Activated T-helper 1 cell treated with anti-CD3 and anti-CD28 coated beads, Interleukin-12 subunit alpha, Interleukin-12 subunit beta, Interleukin-2, Interleukin-4 antibody, amounts not matched to agents 30 ng/mL and 10 ng/mL and 1 ng/mL, durations not matched to agents 14 hours and 24 hours and 36 hours (primary cell): ENCODE measurements at regions of chr17 and their contacts with region 1.

Region 1: DNA sequence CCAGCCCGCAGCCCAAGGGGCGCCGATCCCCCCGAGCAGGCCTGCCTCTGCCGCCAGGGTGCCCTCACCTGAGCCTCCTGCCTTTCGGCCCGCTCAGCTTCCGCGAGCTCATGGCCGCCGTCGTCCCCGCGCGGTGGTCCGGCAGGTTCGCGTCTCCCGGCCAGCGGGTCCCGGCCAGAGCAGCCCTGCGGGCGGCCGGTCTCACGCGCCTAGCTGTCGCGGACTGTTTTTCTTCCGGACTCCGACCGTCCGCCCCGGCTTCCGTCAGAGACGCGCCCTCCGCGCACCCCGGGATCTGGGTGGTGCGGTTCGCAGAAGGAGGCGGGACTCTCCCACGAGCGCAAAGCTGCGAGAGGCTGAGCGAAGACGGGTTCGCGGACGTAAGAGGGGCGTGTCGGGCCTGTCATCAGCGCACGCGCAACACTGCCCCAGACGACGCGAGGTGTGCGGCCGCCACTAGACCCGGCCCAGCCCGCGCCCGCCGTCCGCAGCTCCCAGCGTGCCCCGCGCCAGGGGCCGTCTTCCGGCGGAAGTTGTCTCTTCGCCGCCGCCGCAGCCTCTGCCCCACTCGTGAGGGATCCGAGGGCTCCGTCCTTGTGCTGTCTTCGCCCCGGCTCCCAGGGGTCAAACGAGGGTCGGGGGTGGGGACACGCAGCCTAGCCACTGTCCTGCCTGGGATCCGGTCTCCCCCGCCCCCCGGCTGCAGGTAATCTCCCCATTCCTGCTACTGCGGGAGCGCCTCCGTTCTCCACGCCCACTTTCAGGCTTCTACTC is at the start of gene INPP5K:
- DNase-seq: peak; percentile 99
- H3K4me3 Mint-ChIP-seq: peak within 1 kb of the TSS; percentile 93
- H3K27ac Mint-ChIP-seq: peak within 1 kb of the TSS; percentile 76
- H3K4me1 Mint-ChIP-seq: peaks cover 13% of the 10 kb centered on the region
- H3K27me3 Mint-ChIP-seq: no peaks in the 10 kb centered on the region
- total RNA-seq, gene INPP5K: 23.9 and 24.7 TPM in 2 replicates

Region 2: GRCh38 chr17:1275962-1276736 is 240.4 kb before region 1 on chr17:
- intact Hi-C with region 1: loop called (anchors 1 kb)
- DNase-seq: peak; percentile 63
- H3K4me3 Mint-ChIP-seq: peak overlapping the region; percentile 39
- H3K27ac Mint-ChIP-seq: peak overlapping the region; percentile 59
- H3K4me1 Mint-ChIP-seq: peaks cover 13% of the 10 kb centered on the region
- H3K27me3 Mint-ChIP-seq: peaks cover 23% of the 10 kb centered on the region

Region 3: GRCh38 chr17:1399679-1400512 is 116.7 kb before region 1 on chr17 and contains the start of gene YWHAE:
- intact Hi-C with region 1: loop called (anchors 1 kb)
- DNase-seq: peak; percentile 95
- H3K4me3 Mint-ChIP-seq: peak within 1 kb of the TSS; percentile 97
- H3K27ac Mint-ChIP-seq: peak within 1 kb of the TSS; percentile 98
- H3K4me1 Mint-ChIP-seq: peaks cover 21% of the 10 kb centered on the region
- H3K27me3 Mint-ChIP-seq: peaks cover 5% of the 10 kb centered on the region
- total RNA-seq, gene YWHAE: 439 and 444 TPM in 2 replicates

Region 4: DNA sequence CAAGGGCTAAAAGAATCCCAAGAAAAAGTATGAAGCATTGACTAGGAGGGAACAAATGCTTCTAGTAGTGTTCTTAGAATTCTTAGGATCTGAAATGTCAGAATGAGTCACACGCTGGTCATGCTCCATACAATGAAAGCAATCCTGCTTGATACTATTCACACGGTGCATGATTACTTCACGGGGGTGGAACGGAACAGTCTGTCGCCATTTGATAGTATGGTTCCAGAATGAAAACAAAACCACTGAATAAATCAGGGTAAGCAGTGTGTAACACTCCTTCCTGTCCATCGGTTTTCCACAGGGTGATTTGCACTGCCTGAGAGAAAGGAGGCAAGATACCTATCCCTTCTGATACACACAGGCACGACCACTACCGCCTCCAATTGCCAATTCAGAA is 93.7 kb before region 1 on chr17:
- intact Hi-C with region 1: no loop called
- DNase-seq: no peak
- H3K4me3 Mint-ChIP-seq: no peak overlapping the region
- H3K27ac Mint-ChIP-seq: peak overlapping the region; percentile 65
- H3K4me1 Mint-ChIP-seq: peaks cover 20% of the 10 kb centered on the region
- H3K27me3 Mint-ChIP-seq: no peaks in the 10 kb centered on the region

Region 5: GRCh38 chr17:1474402-1475189 is 42.0 kb before region 1 on chr17:
- intact Hi-C with region 1: no loop called
- DNase-seq: no peak
- H3K4me3 Mint-ChIP-seq: no peak overlapping the region
- H3K27ac Mint-ChIP-seq: no peak overlapping the region
- H3K4me1 Mint-ChIP-seq: peaks cover 12% of the 10 kb centered on the region
- H3K27me3 Mint-ChIP-seq: no peaks in the 10 kb centered on the region

Region 6: GRCh38 chr17:1488030-1488863 is 28.3 kb before region 1 on chr17:
- intact Hi-C with region 1: loop called (anchors 1 kb)
- DNase-seq: peak; percentile 64
- H3K4me3 Mint-ChIP-seq: peak overlapping the region; percentile 84
- H3K27ac Mint-ChIP-seq: no peak overlapping the region
- H3K4me1 Mint-ChIP-seq: peaks cover 24% of the 10 kb centered on the region
- H3K27me3 Mint-ChIP-seq: peaks cover 5% of the 10 kb centered on the region